RWPE1 (cell line): ENCODE measurements at regions of chr19 and their contacts with region 1.

Region 1: GRCh38 chr19:35352448-35353304 is 5.0 kb downstream of the FFAR1 start:
- DNase-seq: peak; percentile 86
- H3K27ac ChIP-seq: no peak overlapping the region
- CTCF ChIP-seq: peak; percentile 83

Region 2: GRCh38 chr19:35395382-35396199 is 42.9 kb after region 1 on chr19:
- CTCF ChIA-PET with region 1: no interaction called
- POLR2A ChIA-PET with region 1: no interaction called
- DNase-seq: no peak
- H3K27ac ChIP-seq: no peak overlapping the region
- CTCF ChIP-seq: no peak

Region 3: DNA sequence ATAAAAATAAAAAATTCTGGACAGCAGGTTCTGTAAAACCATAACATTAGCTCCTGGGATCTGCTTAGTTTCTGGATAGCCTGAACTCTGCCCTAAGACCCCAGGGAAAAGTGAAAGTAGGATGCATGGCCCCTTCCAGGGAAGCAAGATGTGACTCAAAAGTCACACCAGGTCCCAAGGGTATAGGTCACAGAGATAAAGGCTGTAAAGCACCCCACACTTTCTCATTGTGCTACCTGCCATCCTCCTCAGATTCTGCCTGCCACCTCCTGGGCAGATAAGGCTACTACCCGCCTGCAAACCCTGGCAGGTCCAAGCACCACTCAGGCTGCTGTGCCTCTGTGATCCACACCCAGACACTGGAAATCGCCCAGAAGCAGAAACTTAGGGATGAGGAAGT is 116.0 kb after region 1 on chr19:
- CTCF ChIA-PET with region 1: interaction called, 52 read pairs
- POLR2A ChIA-PET with region 1: no interaction called
- DNase-seq: peak; percentile 68
- H3K27ac ChIP-seq: no peak overlapping the region
- CTCF ChIP-seq: peak; percentile 61

Region 4: DNA sequence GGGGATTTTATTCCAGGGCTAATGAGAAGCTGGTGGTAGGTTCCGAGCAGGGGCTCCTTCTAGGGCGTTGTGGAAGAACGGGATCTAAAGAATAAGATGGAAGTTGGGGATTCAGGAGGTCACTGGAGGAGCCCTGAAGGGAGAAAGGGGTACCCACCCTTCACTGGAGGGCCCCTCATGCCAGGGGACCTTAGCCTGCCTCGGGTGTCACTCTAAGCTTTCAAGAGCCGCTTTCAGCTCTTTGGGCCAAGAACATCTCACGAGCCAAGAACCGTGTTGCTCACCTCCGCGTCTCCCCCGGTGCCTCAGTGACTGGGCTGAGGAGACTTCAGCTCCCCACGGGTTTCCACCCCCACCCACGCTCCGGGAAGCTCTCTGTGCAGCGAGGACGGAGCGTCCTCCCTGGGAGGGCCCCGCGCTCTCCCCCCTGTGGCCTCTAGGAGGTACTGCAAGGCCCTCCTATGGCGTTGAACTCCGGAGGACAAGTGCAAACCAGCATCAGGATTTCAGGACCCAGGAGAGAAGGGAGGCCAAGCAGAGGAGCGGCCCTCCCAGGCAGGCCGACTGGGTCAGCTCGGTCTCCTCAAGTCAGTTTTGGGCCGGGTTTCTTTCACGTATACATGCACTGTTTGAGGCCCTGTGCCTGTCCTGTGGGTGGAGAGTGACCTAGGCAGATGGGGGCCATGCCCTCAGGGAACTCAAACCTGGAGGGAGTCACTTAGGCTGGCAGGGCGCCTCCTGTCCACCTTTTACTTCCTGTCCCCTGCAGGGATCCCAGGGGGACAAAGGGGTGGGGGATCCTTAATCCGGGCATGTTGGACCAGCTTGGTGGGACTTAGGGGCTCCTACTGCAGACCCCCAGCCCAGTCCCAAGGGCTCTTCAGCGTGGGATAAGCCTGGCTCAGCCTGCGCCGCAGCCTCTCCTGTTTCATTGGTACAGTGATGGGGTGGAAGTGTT is 142.7 kb after region 1 on chr19:
- CTCF ChIA-PET with region 1: interaction called, 23 read pairs
- POLR2A ChIA-PET with region 1: no interaction called
- DNase-seq: peak; percentile 79
- H3K27ac ChIP-seq: no peak overlapping the region
- CTCF ChIP-seq: peak; percentile 90